A549 (cell line): ENCODE measurements at regions of chr15 and their contacts with region 1.

Region 1: DNA sequence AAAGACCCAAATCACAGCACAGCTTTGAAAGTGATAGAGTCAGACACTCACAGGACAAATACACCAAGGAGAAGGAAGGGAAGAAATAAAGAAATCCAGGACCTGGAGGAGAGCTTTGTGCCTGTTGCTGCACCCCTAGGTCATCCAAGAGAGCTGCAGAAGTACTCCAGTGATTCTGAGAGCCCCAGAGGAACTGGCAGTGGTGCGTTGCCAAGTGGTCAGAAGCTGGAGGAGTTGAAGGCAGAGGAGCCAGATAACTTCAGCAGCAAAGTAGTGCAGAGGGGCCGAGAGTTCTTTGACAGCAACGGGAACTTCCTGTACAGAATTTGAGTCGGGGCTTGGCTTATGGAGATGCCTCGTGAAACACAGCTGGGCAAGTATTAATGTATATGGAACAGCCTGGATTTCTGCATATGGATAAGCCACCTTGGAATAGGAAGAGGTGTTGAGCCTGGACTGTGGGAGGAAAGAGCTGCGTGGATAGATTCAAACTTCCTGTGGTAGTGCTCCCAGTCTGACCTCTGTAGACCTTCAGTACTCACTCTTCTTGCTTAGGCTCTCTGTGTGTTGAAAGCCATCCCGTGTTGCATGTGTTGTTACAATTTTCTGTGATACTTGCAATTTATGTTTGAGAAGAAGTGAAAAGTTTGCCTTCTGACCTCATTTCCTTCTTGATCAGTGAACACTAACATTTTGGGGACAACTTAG is 6.1 kb downstream of the NGRN start:
- DNase-seq: no peak
- ATAC-seq: no peak
- H3K4me3 ChIP-seq: no peak overlapping the region
- H3K27ac ChIP-seq: no peak overlapping the region
- H3K4me1 ChIP-seq: peaks cover 27% of the 10 kb centered on the region
- CTCF ChIP-seq: no peak
- EP300 ChIP-seq: no peak
- POLR2A ChIP-seq: no peak
- RAD21 ChIP-seq: no peak

Region 2: DNA sequence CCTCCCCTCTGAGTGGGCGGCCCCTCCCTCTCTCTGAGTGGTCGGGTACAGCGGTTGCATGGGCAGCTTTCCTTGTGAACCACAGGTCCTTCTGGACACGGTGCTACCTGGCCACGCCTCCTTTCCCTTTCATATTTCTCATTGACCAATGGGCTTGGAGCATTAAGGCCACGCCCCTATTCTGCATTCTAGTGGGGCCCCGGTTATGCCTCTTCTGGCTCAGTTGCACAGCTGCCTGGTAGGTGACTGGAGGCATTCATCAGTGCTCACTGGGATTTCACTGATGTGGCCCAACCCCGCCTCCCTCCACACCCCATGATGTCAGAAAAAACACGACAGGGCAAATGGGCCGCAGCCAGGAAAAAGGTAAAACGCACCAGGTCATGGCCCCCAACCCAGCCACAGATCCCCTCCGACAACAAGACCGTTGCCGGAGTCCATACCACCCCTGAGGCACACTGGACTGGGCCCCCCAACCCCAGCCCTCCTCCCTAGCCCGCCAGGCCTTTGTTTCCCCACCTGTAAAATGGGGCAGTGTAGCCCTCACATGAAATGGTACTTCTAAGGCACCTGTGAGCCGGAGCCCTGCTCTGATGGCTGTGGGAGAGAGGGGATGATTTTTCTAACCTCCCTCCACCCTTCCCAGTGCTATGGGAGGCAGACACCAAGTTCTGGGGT is 20.2 kb after region 1 on chr15:
- CTCF ChIA-PET with region 1: interaction called, 12 read pairs
- POLR2A ChIA-PET with region 1: no interaction called
- DNase-seq: peak; percentile 62 to 71
- ATAC-seq: peak; percentile 32 to 66; a peak in 3 of 6 replicates
- H3K4me3 ChIP-seq: no peak overlapping the region
- H3K27ac ChIP-seq: no peak overlapping the region
- H3K4me1 ChIP-seq: no peaks in the 10 kb centered on the region
- CTCF ChIP-seq: no peak
- EP300 ChIP-seq: no peak; a peak in 1 of 5 replicates
- POLR2A ChIP-seq: no peak
- RAD21 ChIP-seq: no peak